ENCODE measurements at regions of chr15 and their contacts with region 1.

Region 1: GRCh38 chr15:40108855-40109735 is at the start of gene BMF:
- DNase-seq: peak; percentile 97
- H3K4me3 ChIP-seq: peak within 1 kb of the TSS; percentile 78 to 85
- H3K27ac ChIP-seq: peak within 1 kb of the TSS; percentile 23 to 76; a peak in 2 of 4 replicates
- H3K4me1 ChIP-seq: peaks cover 5 to 30% of the 10 kb centered on the region in 2 experiments; a peak in 3 of 4 replicates
- H3K27me3 ChIP-seq: peaks cover 21% of the 10 kb centered on the region; the same call in 1 of the 2 replicates
- CTCF ChIP-seq: peak; percentile 52
- EP300 ChIP-seq: peak in 1 of 2 experiments; percentile 38; a peak in 1 of 4 replicates
- RAD21 ChIP-seq: no peak; the same call in 1 of the 2 replicates
- polyA plus RNA-seq, gene BMF: 0.72 and 1.0 TPM in 2 replicates

Region 2: DNA sequence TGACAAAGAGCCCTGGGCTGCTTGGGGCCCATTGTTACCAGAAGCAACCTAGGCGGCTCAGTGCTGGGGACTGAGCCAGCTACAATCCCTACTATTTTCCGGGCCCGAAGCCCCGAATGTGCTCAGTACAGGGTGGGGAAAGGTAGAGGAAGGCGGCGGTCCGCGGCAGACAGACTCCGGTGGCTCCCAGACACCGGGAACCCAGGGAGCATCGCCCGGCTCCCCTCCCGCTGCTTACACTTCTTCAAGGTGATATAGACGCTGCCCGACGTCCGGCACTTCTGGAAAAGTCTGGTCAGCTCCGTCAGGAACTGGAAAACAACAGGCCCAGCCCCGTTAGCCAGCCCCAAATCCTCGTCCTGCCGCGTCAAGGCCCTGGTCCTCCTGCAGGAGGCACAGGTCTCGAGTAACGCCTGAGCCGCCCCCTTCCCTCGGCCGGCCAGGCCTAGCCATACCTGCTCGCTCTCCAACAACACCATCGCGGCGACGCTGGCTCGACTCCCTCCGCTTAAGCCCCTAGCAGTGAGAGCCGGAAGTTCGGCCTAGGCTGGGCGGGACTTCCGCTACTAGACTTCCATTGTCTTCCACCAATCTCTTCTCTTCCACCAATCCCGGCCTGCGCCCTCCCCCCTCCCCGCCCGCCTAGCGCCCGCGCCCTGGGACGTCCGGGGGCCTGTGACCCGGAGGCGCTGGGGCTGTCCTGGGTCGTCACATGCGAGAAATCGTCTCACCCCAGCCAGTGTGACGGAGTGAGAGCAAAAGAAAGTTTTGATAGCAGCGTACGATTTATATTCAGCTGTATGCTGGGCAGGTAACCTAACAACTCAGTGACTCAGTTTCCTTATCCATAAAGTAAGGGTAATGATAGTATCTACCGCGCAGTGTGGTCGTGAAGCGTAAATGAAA is 70.2 kb before region 1 on chr15 and contains the start of gene SRP14:
- CTCF ChIA-PET with region 1: interaction called, 153 read pairs
- POLR2A ChIA-PET with region 1: interaction called, 3 read pairs
- DNase-seq: peak; percentile 95
- H3K4me3 ChIP-seq: peak within 1 kb of the TSS; percentile 77 to 94
- H3K27ac ChIP-seq: peak within 1 kb of the TSS; percentile 88 to 92
- H3K4me1 ChIP-seq: peaks cover 0 to 20% of the 10 kb centered on the region in 2 experiments; a peak in 2 of 4 replicates
- H3K27me3 ChIP-seq: no peaks in the 10 kb centered on the region
- CTCF ChIP-seq: no peak
- EP300 ChIP-seq: peak in 1 of 2 experiments; percentile 46; a peak in 1 of 4 replicates
- RAD21 ChIP-seq: no peak
- polyA plus RNA-seq, gene SRP14: 489 and 501 TPM in 2 replicates

Region 3: DNA sequence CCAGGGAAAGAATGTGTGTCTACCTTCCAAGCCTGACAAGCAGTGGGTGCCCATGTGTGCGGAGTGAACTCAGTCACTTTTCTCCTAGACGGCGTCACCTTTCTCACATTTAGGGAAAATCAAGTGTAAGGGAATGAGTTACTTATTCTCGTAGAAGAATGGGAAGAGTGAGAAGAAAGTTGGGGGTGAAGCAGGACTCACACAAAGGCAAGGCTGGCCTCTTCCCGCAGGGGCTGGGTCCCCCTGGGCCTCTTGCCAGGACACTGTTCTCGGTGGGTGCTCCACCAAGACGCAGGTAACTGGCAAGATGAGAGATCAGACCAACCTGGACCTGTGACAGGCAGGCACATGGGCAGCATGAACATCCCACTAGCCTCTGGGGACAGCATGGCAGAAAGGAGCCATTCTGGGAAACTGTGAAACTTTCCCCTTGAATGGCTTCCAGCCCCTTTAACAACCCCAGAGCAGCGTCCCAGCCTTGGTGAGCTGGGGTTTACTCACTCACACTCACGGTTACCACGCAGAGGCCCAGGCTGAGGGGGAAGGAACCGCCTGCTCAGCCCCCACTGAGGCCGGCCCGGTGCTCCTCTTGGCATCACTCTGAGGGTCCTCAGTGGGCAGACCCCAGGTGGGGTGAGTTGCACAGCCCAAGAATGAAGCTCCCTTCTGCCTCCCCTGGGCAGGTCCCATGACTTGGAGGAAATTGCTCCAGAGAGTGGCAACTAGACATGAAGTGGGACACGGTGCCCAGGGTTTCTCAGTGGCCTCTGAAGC is 55.1 kb before region 1 on chr15:
- CTCF ChIA-PET with region 1: interaction called, 153 read pairs
- POLR2A ChIA-PET with region 1: no interaction called
- DNase-seq: no peak
- H3K4me3 ChIP-seq: no peak overlapping the region
- H3K27ac ChIP-seq: no peak overlapping the region
- H3K4me1 ChIP-seq: peaks cover 0 to 25% of the 10 kb centered on the region in 2 experiments; a peak in 1 of 4 replicates
- H3K27me3 ChIP-seq: no peaks in the 10 kb centered on the region
- CTCF ChIP-seq: no peak
- EP300 ChIP-seq: no peak
- RAD21 ChIP-seq: no peak

Region 4: DNA sequence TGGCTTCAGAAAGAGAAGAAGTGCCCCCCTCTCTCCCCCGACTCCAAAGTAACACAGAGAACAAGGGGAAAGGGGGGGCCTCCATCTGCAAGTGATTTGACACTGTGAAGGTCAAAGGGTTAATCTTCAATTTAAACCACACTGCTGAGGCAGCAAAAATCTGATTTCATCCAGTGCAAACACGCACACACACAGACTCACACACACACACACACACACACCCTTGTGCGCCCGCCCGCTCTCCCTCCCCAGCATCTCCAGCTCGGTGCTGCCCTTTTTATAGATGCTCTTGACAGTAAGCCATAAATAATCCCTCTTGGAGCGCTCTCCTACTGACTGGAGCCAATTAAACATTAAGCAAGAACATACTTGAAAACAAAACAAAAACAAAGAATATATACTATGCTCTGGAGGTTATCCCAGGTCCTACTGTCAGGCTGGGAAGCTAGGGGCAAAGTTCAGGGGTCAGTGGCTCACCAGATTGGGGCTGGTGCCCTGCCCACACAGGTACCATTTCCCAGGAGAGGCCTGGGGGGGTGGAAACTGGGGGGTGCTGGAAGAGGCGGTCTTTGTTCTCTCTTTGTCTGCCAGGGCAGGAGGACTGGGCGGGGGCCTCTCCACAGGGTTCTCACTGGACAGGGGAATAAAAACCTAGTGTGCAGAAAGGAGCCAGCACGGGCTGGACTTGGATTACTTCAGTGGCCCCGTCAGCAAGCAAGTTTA is 16.7 kb before region 1 on chr15:
- CTCF ChIA-PET with region 1: interaction called, 137 read pairs
- POLR2A ChIA-PET with region 1: interaction called, 4 read pairs
- DNase-seq: peak; percentile 54
- H3K4me3 ChIP-seq: no peak overlapping the region
- H3K27ac ChIP-seq: peak overlapping the region; percentile 13 to 76; a peak in 3 of 4 replicates
- H3K4me1 ChIP-seq: peaks cover 34 to 83% of the 10 kb centered on the region in 2 experiments
- H3K27me3 ChIP-seq: no peaks in the 10 kb centered on the region
- CTCF ChIP-seq: no peak
- EP300 ChIP-seq: peak in 1 of 2 experiments; percentile 56; a peak in 1 of 4 replicates
- RAD21 ChIP-seq: 0 out of 2 replicates have a peak, but pooled peaks have one; percentile 22

Region 5: GRCh38 chr15:40160689-40161688 is 51.9 kb after region 1 on chr15 and contains the start of gene BUB1B:
- CTCF ChIA-PET with region 1: interaction called, 21 read pairs
- POLR2A ChIA-PET with region 1: interaction called, 3 read pairs
- DNase-seq: peak; percentile 90
- H3K4me3 ChIP-seq: peak within 1 kb of the TSS; percentile 86 to 91
- H3K27ac ChIP-seq: peak within 1 kb of the TSS; percentile 21 to 71; a peak in 3 of 4 replicates
- H3K4me1 ChIP-seq: peaks cover 0 to 14% of the 10 kb centered on the region in 2 experiments; a peak in 2 of 4 replicates
- H3K27me3 ChIP-seq: no peaks in the 10 kb centered on the region
- CTCF ChIP-seq: no peak
- EP300 ChIP-seq: no peak
- RAD21 ChIP-seq: no peak
- polyA plus RNA-seq, gene BUB1B: 12.6 and 13.8 TPM in 2 replicates

Region 6: GRCh38 chr15:40217159-40217824 is 108.2 kb after region 1 on chr15:
- CTCF ChIA-PET with region 1: interaction called, 12 read pairs
- POLR2A ChIA-PET with region 1: no interaction called
- DNase-seq: peak; percentile 71
- H3K4me3 ChIP-seq: no peak overlapping the region; a peak in 1 of 4 replicates
- H3K27ac ChIP-seq: no peak overlapping the region
- H3K4me1 ChIP-seq: no peaks in the 10 kb centered on the region
- H3K27me3 ChIP-seq: no peaks in the 10 kb centered on the region
- CTCF ChIP-seq: peak; percentile 89
- EP300 ChIP-seq: no peak
- RAD21 ChIP-seq: peak; percentile 95

Measured in SK-N-SH (cell line).